Activated CD4-positive, alpha-beta memory T cell treated with anti-CD3 and anti-CD28 coated beads for 36 hours (primary cell): ENCODE measurements at regions of chr18 and their contacts with region 1.

Region 1: GRCh38 chr18:61893971-61894750 is 1.4 kb upstream of the RNF152 start:
- DNase-seq: peak; percentile 77
- H3K4me3 Mint-ChIP-seq: peak overlapping the region; percentile 74
- H3K27ac Mint-ChIP-seq: no peak overlapping the region
- H3K4me1 Mint-ChIP-seq: peaks cover 8% of the 10 kb centered on the region
- H3K27me3 Mint-ChIP-seq: peaks cover 32% of the 10 kb centered on the region

Region 2: GRCh38 chr18:61551586-61551985 is 342.6 kb before region 1 on chr18:
- CTCF ChIA-PET with region 1: no interaction called
- POLR2A ChIA-PET with region 1: no interaction called
- intact Hi-C with region 1: loop called (anchors 10 kb)
- DNase-seq: no peak
- H3K4me3 Mint-ChIP-seq: no peak overlapping the region
- H3K27ac Mint-ChIP-seq: no peak overlapping the region
- H3K4me1 Mint-ChIP-seq: peaks cover 9% of the 10 kb centered on the region
- H3K27me3 Mint-ChIP-seq: peaks cover 9% of the 10 kb centered on the region

Region 3: GRCh38 chr18:61635901-61636528 is 258.1 kb before region 1 on chr18:
- CTCF ChIA-PET with region 1: interaction called, 3 read pairs
- POLR2A ChIA-PET with region 1: no interaction called
- intact Hi-C with region 1: loop called (anchors 2 kb)
- DNase-seq: peak; percentile 54
- H3K4me3 Mint-ChIP-seq: no peak overlapping the region
- H3K27ac Mint-ChIP-seq: no peak overlapping the region
- H3K4me1 Mint-ChIP-seq: no peaks in the 10 kb centered on the region
- H3K27me3 Mint-ChIP-seq: peaks cover 2% of the 10 kb centered on the region

Region 4: GRCh38 chr18:61765097-61765496 is 129.1 kb before region 1 on chr18:
- CTCF ChIA-PET with region 1: no interaction called
- POLR2A ChIA-PET with region 1: no interaction called
- intact Hi-C with region 1: no loop called
- DNase-seq: no peak
- H3K4me3 Mint-ChIP-seq: no peak overlapping the region
- H3K27ac Mint-ChIP-seq: no peak overlapping the region
- H3K4me1 Mint-ChIP-seq: peaks cover 14% of the 10 kb centered on the region
- H3K27me3 Mint-ChIP-seq: peaks cover 3% of the 10 kb centered on the region

Region 5: GRCh38 chr18:62186774-62187542 is 292.8 kb after region 1 on chr18 and contains the starts of genes PIGN and RELCH:
- CTCF ChIA-PET with region 1: no interaction called
- POLR2A ChIA-PET with region 1: no interaction called
- intact Hi-C with region 1: loop called (anchors 2 kb)
- DNase-seq: peak; percentile 97
- H3K4me3 Mint-ChIP-seq: peak within 1 kb of the TSS; percentile 99
- H3K27ac Mint-ChIP-seq: peak within 1 kb of the TSS; percentile 93
- H3K4me1 Mint-ChIP-seq: peaks cover 51% of the 10 kb centered on the region
- H3K27me3 Mint-ChIP-seq: no peaks in the 10 kb centered on the region
- total RNA-seq, gene PIGN: 26.2 to 27.8 TPM
- total RNA-seq, gene RELCH: 16.1 to 17.7 TPM